ENCODE measurements at regions of chr6 and their contacts with region 1.

Region 1: DNA sequence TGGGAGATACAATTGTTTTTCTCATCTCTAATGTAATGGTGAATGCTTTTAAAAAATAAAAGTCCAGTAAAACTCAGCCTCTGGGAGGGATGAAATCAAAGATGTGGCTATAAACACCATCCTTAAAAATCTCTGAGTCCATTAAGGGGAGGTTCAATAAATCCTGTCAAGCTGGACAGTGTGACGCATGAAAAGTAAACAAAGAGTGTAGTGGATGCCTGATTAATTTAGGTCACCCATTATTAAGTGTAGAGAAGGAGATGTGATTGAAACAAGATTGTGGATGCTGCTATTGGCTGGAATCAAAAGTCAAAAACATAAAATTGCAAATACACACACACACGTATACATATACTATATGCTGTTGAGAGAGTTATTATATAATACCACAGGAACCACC is 115.9 kb downstream of the COL21A1 start:
- DNase-seq: no peak
- ATAC-seq: no peak
- H3K4me3 ChIP-seq: no peak overlapping the region
- H3K27ac ChIP-seq: no peak overlapping the region
- H3K4me1 ChIP-seq: no peaks in the 10 kb centered on the region
- H3K27me3 ChIP-seq: no peaks in the 10 kb centered on the region
- CTCF ChIP-seq: no peak
- POLR2A ChIP-seq: no peak
- RAD21 ChIP-seq: no peak

Region 2: GRCh38 chr6:54366667-54367327 is 1764.6 kb before region 1 on chr6:
- CTCF ChIA-PET with region 1: no interaction called
- POLR2A ChIA-PET with region 1: no interaction called
- RAD21 ChIA-PET with region 1: no interaction called
- intact Hi-C with region 1: loop called (anchors 5 kb)
- DNase-seq: peak; percentile 28
- ATAC-seq: peak; percentile 17; the same call in 1 of the 2 replicates
- H3K4me3 ChIP-seq: no peak overlapping the region
- H3K27ac ChIP-seq: no peak overlapping the region
- H3K4me1 ChIP-seq: peaks cover 0 to 13% of the 10 kb centered on the region in 2 experiments; a peak in 2 of 4 replicates
- H3K27me3 ChIP-seq: no peaks in the 10 kb centered on the region
- CTCF ChIP-seq: no peak
- POLR2A ChIP-seq: no peak
- RAD21 ChIP-seq: no peak

Region 3: GRCh38 chr6:55913213-55914195 is 217.9 kb before region 1 on chr6:
- CTCF ChIA-PET with region 1: no interaction called
- POLR2A ChIA-PET with region 1: no interaction called
- RAD21 ChIA-PET with region 1: no interaction called
- intact Hi-C with region 1: no loop called
- DNase-seq: no peak
- ATAC-seq: no peak
- H3K4me3 ChIP-seq: no peak overlapping the region
- H3K27ac ChIP-seq: no peak overlapping the region
- H3K4me1 ChIP-seq: 0 out of 4 replicates have a peak, but pooled peaks cover 0 to 5% of the 10 kb centered on the region in 2 experiments
- H3K27me3 ChIP-seq: no peaks in the 10 kb centered on the region
- CTCF ChIP-seq: no peak
- POLR2A ChIP-seq: no peak
- RAD21 ChIP-seq: no peak

Region 4: DNA sequence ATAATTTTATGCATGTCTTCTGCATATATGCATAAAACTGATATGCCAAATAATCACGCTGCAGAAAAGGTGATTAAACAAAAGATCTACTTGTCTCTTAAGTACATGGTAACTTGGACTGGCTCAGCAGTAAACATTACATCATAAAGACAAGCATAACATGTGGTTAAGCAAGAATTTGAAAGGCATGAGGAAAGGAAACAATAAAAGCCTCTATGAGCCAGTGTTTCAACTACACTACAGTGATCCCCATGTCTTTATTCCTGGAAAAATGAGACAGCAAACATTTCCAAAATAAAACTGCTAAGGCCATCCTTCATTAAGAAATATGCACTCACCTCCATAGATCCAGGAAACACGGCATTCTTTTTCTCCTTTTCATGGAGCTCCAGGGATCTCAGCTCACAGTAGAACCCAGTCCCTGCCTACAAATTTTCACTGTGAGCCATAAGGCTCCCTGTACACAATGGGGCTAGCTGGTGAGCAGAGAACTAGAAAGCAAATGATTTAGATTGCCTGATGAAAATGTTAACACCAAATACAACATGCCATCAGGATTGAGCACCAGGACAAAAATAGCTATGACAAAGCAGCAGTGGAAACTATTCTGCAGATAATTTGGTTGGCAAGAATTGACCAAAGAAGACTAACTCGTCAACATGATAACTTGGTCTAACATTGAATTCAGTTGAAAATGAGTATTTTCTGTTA is 40.1 kb before region 1 on chr6:
- CTCF ChIA-PET with region 1: no interaction called
- POLR2A ChIA-PET with region 1: no interaction called
- RAD21 ChIA-PET with region 1: no interaction called
- intact Hi-C with region 1: no loop called
- DNase-seq: peak; percentile 26
- ATAC-seq: no peak
- H3K4me3 ChIP-seq: no peak overlapping the region
- H3K27ac ChIP-seq: no peak overlapping the region
- H3K4me1 ChIP-seq: peaks cover 7 to 9% of the 10 kb centered on the region in 2 experiments; a peak in 2 of 4 replicates
- H3K27me3 ChIP-seq: no peaks in the 10 kb centered on the region
- CTCF ChIP-seq: no peak
- POLR2A ChIP-seq: no peak
- RAD21 ChIP-seq: no peak

Region 5: DNA sequence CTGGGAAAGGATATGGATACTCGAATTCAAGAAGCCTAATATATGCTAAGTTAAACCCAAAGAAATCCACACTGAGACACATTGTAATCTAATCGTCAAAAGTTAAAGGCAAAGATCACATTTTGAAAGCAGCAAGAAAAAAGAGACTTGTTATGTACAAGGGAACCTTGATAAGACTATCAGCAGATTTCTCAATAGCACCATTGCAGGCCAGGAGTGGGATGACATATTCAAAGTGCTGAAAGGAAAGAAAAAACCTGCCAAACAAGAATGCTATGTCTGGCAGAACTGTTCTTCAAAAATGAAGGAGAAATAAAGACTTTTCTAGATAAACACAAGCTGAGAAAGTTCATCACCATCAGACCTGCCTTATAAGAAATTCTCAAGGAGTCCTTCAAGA is 40.7 kb after region 1 on chr6:
- CTCF ChIA-PET with region 1: no interaction called
- POLR2A ChIA-PET with region 1: no interaction called
- RAD21 ChIA-PET with region 1: no interaction called
- intact Hi-C with region 1: no loop called
- DNase-seq: no peak
- ATAC-seq: no peak
- H3K4me3 ChIP-seq: no peak overlapping the region
- H3K27ac ChIP-seq: no peak overlapping the region
- H3K4me1 ChIP-seq: no peaks in the 10 kb centered on the region
- H3K27me3 ChIP-seq: no peaks in the 10 kb centered on the region
- CTCF ChIP-seq: 0 out of 6 replicates have a peak, but pooled peaks of 2 of the 3 experiments have one; percentile 8 to 11
- POLR2A ChIP-seq: no peak
- RAD21 ChIP-seq: no peak